Activated CD4-positive, alpha-beta memory T cell treated with anti-CD3 and anti-CD28 coated beads for 36 hours (primary cell): ENCODE measurements at regions of chr6 and their contacts with region 1.

Region 1: DNA sequence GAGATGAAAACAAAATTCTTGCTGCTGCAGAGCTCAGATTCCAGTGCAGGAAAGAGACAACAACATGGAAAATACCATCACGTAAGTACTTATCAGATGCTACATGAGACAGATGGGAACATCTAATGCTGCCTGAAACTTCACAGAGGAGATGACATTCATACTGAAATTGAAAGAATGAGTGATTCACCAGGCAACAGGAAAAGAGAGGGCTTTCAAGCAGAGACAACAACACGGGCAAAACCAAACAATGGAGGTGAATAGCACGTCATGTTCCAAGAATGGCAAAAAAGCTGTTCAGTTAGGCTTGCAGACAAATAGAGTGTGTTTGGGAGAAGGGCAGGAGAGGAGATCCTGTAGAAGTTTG is 39.3 kb downstream of the GTF2H5 start:
- DNase-seq: peak; percentile 59
- H3K4me3 Mint-ChIP-seq: peak overlapping the region; percentile 30
- H3K27ac Mint-ChIP-seq: peak overlapping the region; percentile 87
- H3K4me1 Mint-ChIP-seq: peaks cover 30% of the 10 kb centered on the region
- H3K27me3 Mint-ChIP-seq: no peaks in the 10 kb centered on the region

Region 2: GRCh38 chr6:158143700-158144099 is 63.7 kb before region 1 on chr6:
- CTCF ChIA-PET with region 1: interaction called, 17 read pairs
- POLR2A ChIA-PET with region 1: no interaction called
- intact Hi-C with region 1: loop called (anchors 10 kb)
- DNase-seq: no peak
- H3K4me3 Mint-ChIP-seq: no peak overlapping the region
- H3K27ac Mint-ChIP-seq: no peak overlapping the region
- H3K4me1 Mint-ChIP-seq: no peaks in the 10 kb centered on the region
- H3K27me3 Mint-ChIP-seq: no peaks in the 10 kb centered on the region

Region 3: DNA sequence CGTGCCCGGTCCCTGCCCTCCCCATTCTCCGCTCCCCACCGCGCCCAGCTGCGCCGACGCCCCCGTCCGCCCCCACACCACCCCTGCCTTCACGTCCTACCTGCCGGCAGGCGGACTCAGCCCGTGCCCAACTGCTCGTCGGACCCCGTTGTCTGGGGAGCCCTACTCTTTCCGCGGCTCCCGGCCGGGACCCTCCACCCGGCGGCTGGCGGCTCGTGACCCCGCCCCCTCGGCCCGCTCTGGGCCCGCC is 39.4 kb before region 1 on chr6 and contains the start of gene SERAC1:
- CTCF ChIA-PET with region 1: no interaction called
- POLR2A ChIA-PET with region 1: interaction called, 3 read pairs
- intact Hi-C with region 1: loop called (anchors 1 kb)
- DNase-seq: no peak
- H3K4me3 Mint-ChIP-seq: peak within 1 kb of the TSS; percentile 91
- H3K27ac Mint-ChIP-seq: peak within 1 kb of the TSS; percentile 95
- H3K4me1 Mint-ChIP-seq: peaks cover 33% of the 10 kb centered on the region
- H3K27me3 Mint-ChIP-seq: no peaks in the 10 kb centered on the region
- total RNA-seq, gene SERAC1: 7.8 to 8.9 TPM

Region 4: GRCh38 chr6:158185729-158186456 is 21.5 kb before region 1 on chr6:
- CTCF ChIA-PET with region 1: no interaction called
- POLR2A ChIA-PET with region 1: interaction called, 4 read pairs
- intact Hi-C with region 1: loop called (anchors 2 kb)
- DNase-seq: no peak
- H3K4me3 Mint-ChIP-seq: no peak overlapping the region
- H3K27ac Mint-ChIP-seq: no peak overlapping the region
- H3K4me1 Mint-ChIP-seq: peaks cover 29% of the 10 kb centered on the region
- H3K27me3 Mint-ChIP-seq: no peaks in the 10 kb centered on the region